ENCODE measurements at regions of chr10 and their contacts with region 1.

Region 1: DNA sequence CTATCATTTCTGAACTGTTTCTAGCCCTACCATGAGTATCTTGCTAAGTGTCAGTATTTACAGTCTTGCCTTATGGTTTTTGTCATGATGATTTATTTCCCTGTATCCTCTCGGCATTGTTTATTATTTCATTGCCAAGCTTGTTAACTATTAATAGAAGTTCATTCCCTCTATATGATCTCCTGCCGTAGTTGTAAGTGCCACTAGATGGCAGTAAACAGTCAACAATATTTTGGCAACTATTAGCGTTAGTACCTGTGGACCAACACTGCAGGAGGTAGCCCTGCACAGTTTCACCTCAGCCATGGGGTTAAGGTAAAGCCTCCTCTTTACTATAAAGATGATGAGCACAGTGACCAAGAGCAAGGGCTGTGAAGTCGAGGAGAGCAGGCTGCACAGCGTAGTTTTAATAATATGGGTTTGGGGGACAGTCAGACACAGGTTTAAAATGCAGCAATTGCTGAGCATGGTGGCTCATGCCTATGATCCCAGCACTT is 26.1 kb upstream of the CCNJ start:
- DNase-seq: peak; percentile 21
- H3K4me3 ChIP-seq: no peak overlapping the region
- H3K27ac ChIP-seq: no peak overlapping the region
- H3K4me1 ChIP-seq: peaks cover 0 to 6% (median 0%) of the 10 kb centered on the region in 4 donors
- H3K27me3 ChIP-seq: no peaks in the 10 kb centered on the region
- CTCF ChIP-seq: peak; percentile 69 to 79 (median 77)
- EP300 ChIP-seq: no peak
- POLR2A ChIP-seq: no peak

Region 2: GRCh38 chr10:96306516-96306915 is 289.3 kb after region 1 on chr10:
- in situ Hi-C with region 1: loop called in 3 of 4 experiments (anchors 25 kb)
- intact Hi-C with region 1: no loop called
- DNase-seq: peak; percentile 41
- H3K4me3 ChIP-seq: no peak overlapping the region
- H3K27ac ChIP-seq: no peak overlapping the region
- H3K4me1 ChIP-seq: peaks cover 12 to 22% (median 15%) of the 10 kb centered on the region in 4 donors
- H3K27me3 ChIP-seq: no peaks in the 10 kb centered on the region
- CTCF ChIP-seq: no peak
- EP300 ChIP-seq: no peak
- POLR2A ChIP-seq: no peak

Region 3: GRCh38 chr10:96431211-96431970 is 414.2 kb after region 1 on chr10:
- in situ Hi-C with region 1: no loop called
- intact Hi-C with region 1: no loop called
- DNase-seq: no peak
- H3K4me3 ChIP-seq: no peak overlapping the region
- H3K27ac ChIP-seq: no peak overlapping the region
- H3K4me1 ChIP-seq: no peaks in the 10 kb centered on the region
- H3K27me3 ChIP-seq: peaks cover 7% of the 10 kb centered on the region
- CTCF ChIP-seq: no peak
- EP300 ChIP-seq: no peak
- POLR2A ChIP-seq: no peak

Measured in transverse colon (tissue), 4 donors.